Activated CD8-positive, alpha-beta T cell treated with anti-CD3 and anti-CD28 coated beads for 36 hours (primary cell): ENCODE measurements at regions of chr11 and their contacts with region 1.

Region 1: GRCh38 chr11:57324886-57325734 is at the start of gene TNKS1BP1:
- DNase-seq: peak; percentile 94
- ATAC-seq: peak; percentile 86
- H3K4me3 Mint-ChIP-seq: peak within 1 kb of the TSS; percentile 89
- H3K27ac Mint-ChIP-seq: peak within 1 kb of the TSS; percentile 98
- H3K4me1 Mint-ChIP-seq: peaks cover 52% of the 10 kb centered on the region
- H3K27me3 Mint-ChIP-seq: no peaks in the 10 kb centered on the region
- CTCF ChIP-seq: no peak
- total RNA-seq, gene TNKS1BP1: 18.4 to 23.2 TPM

Region 2: GRCh38 chr11:57131080-57131790 is 193.9 kb before region 1 on chr11:
- CTCF ChIA-PET with region 1: no interaction called
- POLR2A ChIA-PET with region 1: no interaction called
- intact Hi-C with region 1: no loop called
- DNase-seq: no peak
- ATAC-seq: no peak
- H3K4me3 Mint-ChIP-seq: no peak overlapping the region
- H3K27ac Mint-ChIP-seq: no peak overlapping the region
- H3K4me1 Mint-ChIP-seq: no peaks in the 10 kb centered on the region
- H3K27me3 Mint-ChIP-seq: peaks cover 24% of the 10 kb centered on the region
- CTCF ChIP-seq: no peak

Region 3: GRCh38 chr11:57311109-57311936 is 13.8 kb before region 1 on chr11:
- CTCF ChIA-PET with region 1: interaction called, 9 read pairs
- POLR2A ChIA-PET with region 1: interaction called, 38 read pairs
- intact Hi-C with region 1: no loop called
- DNase-seq: peak; percentile 90
- ATAC-seq: peak; percentile 99
- H3K4me3 Mint-ChIP-seq: no peak overlapping the region
- H3K27ac Mint-ChIP-seq: no peak overlapping the region
- H3K4me1 Mint-ChIP-seq: peaks cover 16% of the 10 kb centered on the region
- H3K27me3 Mint-ChIP-seq: no peaks in the 10 kb centered on the region
- CTCF ChIP-seq: no peak

Region 4: DNA sequence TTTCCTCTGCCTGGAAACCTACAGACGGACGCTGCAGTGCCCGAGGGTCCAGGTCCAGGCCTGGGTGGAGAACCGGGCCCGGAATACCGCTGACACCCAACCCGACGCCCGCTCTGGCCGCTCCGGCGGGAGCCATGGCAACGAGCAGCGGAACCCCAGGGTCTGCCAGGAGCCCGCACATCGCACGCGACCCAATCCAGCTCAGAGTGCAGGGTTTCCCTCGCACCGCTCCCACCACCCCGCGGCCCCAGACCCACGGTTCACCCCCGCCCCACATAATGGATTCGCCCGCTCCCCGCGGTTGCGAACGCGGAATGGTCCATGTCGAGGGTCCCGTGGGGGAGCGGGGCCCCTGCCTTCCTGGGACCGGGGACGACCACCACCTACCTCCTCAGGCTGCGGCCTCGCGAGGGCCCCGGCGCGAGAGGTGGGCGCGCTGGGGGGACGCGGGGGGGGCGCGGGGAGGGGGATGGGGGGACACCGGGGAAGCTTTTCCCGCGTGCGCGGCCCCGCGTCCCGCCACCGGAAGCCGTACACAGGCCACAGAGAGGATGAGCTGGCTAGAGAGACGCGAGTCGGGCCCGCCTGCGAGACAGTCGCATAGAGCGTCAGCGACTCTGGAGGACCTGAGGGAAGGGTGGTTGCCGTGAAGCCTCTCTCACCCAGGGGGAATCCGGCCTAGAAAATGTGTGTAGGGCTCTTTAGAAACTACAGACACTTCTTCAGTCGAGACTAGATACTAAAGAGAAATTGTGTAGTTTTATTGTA is 10.4 kb after region 1 on chr11 and contains the start of gene SSRP1:
- CTCF ChIA-PET with region 1: interaction called, 4 read pairs
- POLR2A ChIA-PET with region 1: interaction called, 63 read pairs
- intact Hi-C with region 1: no loop called
- DNase-seq: peak; percentile 91
- ATAC-seq: peak; percentile 98
- H3K4me3 Mint-ChIP-seq: peak within 1 kb of the TSS; percentile 96
- H3K27ac Mint-ChIP-seq: peak within 1 kb of the TSS; percentile 100
- H3K4me1 Mint-ChIP-seq: peaks cover 47% of the 10 kb centered on the region
- H3K27me3 Mint-ChIP-seq: no peaks in the 10 kb centered on the region
- CTCF ChIP-seq: no peak
- total RNA-seq, gene SSRP1: 284 to 290 TPM